ENCODE measurements at regions of chr10 and their contacts with region 1.

Region 1: GRCh38 chr10:17685233-17685840 is 41.4 kb downstream of the STAM start:
- DNase-seq: no peak
- H3K4me3 Mint-ChIP-seq: no peak overlapping the region
- H3K27ac Mint-ChIP-seq: peak overlapping the region; percentile 71
- H3K4me1 Mint-ChIP-seq: peaks cover 34% of the 10 kb centered on the region
- H3K27me3 Mint-ChIP-seq: no peaks in the 10 kb centered on the region

Region 2: GRCh38 chr10:17617031-17617911 is 68.1 kb before region 1 on chr10 and contains the start of gene HACD1:
- intact Hi-C with region 1: loop called (anchors 5 kb)
- DNase-seq: peak; percentile 29
- H3K4me3 Mint-ChIP-seq: peak within 1 kb of the TSS; percentile 86
- H3K27ac Mint-ChIP-seq: peak within 1 kb of the TSS; percentile 68
- H3K4me1 Mint-ChIP-seq: peaks cover 6% of the 10 kb centered on the region
- H3K27me3 Mint-ChIP-seq: peaks cover 43% of the 10 kb centered on the region
- total RNA-seq, gene HACD1: 0.80 and 1.5 TPM in 2 replicates

Region 3: GRCh38 chr10:17669185-17669872 is 16.0 kb before region 1 on chr10:
- intact Hi-C with region 1: loop called (anchors 1 kb)
- DNase-seq: no peak
- H3K4me3 Mint-ChIP-seq: peak overlapping the region; percentile 74
- H3K27ac Mint-ChIP-seq: peak overlapping the region; percentile 89
- H3K4me1 Mint-ChIP-seq: peaks cover 60% of the 10 kb centered on the region
- H3K27me3 Mint-ChIP-seq: no peaks in the 10 kb centered on the region